Activated CD4-positive, alpha-beta memory T cell treated with anti-CD3 and anti-CD28 coated beads for 36 hours (primary cell): ENCODE measurements at regions of chr1 and their contacts with region 1.

Region 1: DNA sequence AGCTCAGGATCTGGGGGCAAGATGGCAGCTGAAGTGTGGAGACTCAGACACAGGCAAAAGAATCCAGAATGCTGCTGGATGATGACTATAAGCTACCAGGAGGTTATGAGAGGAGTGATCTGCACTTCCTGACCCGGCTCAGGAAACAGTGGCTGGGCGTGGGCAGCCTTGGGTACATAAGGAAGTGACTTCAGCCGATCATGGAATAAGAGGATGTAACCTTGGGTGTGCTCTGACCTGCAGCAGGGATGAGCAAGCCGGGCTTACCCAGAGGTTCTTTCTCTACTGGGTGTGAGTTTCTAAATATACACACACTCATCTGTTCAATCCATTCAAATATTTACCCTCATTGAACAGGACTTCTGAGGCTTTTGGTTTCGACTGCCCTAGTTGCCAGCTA is 62.7 kb downstream of the CD34 start:
- DNase-seq: peak; percentile 86
- H3K4me3 Mint-ChIP-seq: peak overlapping the region; percentile 1
- H3K27ac Mint-ChIP-seq: peak overlapping the region; percentile 75
- H3K4me1 Mint-ChIP-seq: peaks cover 67% of the 10 kb centered on the region
- H3K27me3 Mint-ChIP-seq: no peaks in the 10 kb centered on the region

Region 2: DNA sequence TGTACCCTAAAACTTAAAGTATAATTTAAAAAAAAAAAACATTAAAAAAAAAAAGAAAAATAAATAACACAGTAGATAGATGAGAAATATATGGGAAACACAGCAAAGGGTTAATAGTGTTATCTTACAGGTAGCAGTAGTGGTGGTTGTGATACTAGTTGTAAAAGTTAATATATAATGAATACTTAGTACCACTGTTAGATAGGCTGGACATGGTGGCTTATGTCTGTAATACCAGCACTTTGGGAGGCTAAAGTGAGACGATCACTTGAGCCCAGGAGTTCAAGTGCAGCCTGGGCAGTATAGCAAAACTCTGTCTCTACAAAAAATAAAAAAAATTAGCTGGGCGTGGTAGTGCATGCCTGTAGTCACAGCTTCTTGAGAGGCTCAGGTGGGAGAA is 129.0 kb before region 1 on chr1:
- CTCF ChIA-PET with region 1: no interaction called
- POLR2A ChIA-PET with region 1: no interaction called
- intact Hi-C with region 1: no loop called
- DNase-seq: no peak
- H3K4me3 Mint-ChIP-seq: no peak overlapping the region
- H3K27ac Mint-ChIP-seq: no peak overlapping the region
- H3K4me1 Mint-ChIP-seq: no peaks in the 10 kb centered on the region
- H3K27me3 Mint-ChIP-seq: peaks cover 5% of the 10 kb centered on the region

Region 3: DNA sequence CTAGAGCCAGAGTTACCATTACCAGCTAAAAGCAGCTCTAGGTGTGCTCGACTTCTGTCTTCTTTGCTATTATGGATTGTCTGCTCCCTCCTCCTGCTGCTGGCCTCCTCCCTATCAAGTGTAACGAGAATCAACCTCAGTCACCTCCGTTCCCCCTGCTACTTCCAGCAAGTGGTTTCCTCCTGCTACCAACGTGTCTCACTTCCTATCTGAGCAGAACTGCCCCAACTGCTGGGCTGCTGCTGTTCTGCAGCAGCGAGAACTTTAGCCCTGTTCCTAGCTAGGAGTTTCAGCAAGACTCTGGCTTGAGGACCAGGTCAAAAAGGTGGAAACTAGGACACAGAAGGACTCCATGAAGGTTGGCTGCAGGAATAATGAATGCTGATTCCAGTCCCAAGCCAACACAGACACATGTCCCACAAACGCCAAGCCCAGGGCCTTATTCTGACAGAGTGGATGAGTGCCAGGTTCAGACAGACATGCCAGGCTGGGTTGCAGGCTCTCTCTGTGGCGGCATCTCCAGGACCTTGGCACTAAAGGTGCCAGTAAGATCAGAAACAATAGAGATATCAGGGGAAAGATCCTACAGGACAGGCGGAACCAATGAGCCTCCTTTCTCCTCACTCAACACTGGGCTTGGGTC is 15.8 kb after region 1 on chr1:
- CTCF ChIA-PET with region 1: interaction called, 43 read pairs
- POLR2A ChIA-PET with region 1: interaction called, 4 read pairs
- intact Hi-C with region 1: loop called (anchors 1 kb)
- DNase-seq: peak; percentile 68
- H3K4me3 Mint-ChIP-seq: peak overlapping the region; percentile 6
- H3K27ac Mint-ChIP-seq: peak overlapping the region; percentile 83
- H3K4me1 Mint-ChIP-seq: peaks cover 64% of the 10 kb centered on the region
- H3K27me3 Mint-ChIP-seq: no peaks in the 10 kb centered on the region